A673 (cell line): ENCODE measurements at regions of chr22 and their contacts with region 1.

Region 1: GRCh38 chr22:18077639-18078328 is at the start of gene PEX26:
- DNase-seq: peak; percentile 97
- H3K4me3 ChIP-seq: peak within 1 kb of the TSS; percentile 91
- H3K27ac ChIP-seq: peak within 1 kb of the TSS; percentile 70
- H3K4me1 ChIP-seq: peaks cover 19% of the 10 kb centered on the region
- H3K27me3 ChIP-seq: no peaks in the 10 kb centered on the region
- CTCF ChIP-seq: no peak
- total RNA-seq, gene PEX26: 36.9 and 38.3 TPM in 2 replicates

Region 2: GRCh38 chr22:17552737-17553136 is 525.0 kb before region 1 on chr22:
- CTCF ChIA-PET with region 1: no interaction called
- POLR2A ChIA-PET with region 1: no interaction called
- intact Hi-C with region 1: loop called (anchors 10 kb)
- DNase-seq: no peak
- H3K4me3 ChIP-seq: no peak overlapping the region
- H3K27ac ChIP-seq: no peak overlapping the region
- H3K4me1 ChIP-seq: no peaks in the 10 kb centered on the region
- H3K27me3 ChIP-seq: no peaks in the 10 kb centered on the region
- CTCF ChIP-seq: no peak

Region 3: DNA sequence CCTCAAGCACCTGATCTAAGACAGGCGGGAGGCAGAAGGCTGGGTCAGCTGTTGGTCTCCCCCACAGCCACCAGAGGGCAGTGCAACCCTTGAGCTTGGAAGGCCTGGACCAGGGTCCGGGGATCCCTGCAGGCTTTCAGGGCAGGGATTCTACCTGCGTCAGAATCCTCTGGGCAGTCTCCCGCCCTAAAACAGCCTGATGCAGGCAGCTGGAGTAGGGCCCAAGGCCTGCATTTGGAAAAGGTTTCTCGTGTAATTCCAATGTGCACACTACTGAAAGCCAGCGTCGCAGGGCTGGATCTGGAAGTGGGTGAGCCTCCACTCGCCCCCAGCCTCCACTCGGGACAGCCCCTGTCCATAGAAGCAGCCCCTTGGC is 335.3 kb before region 1 on chr22:
- CTCF ChIA-PET with region 1: interaction called, 10 read pairs
- POLR2A ChIA-PET with region 1: no interaction called
- intact Hi-C with region 1: loop called (anchors 2 kb)
- DNase-seq: peak; percentile 75
- H3K4me3 ChIP-seq: no peak overlapping the region
- H3K27ac ChIP-seq: no peak overlapping the region
- H3K4me1 ChIP-seq: no peaks in the 10 kb centered on the region
- H3K27me3 ChIP-seq: no peaks in the 10 kb centered on the region
- CTCF ChIP-seq: peak; percentile 74

Region 4: DNA sequence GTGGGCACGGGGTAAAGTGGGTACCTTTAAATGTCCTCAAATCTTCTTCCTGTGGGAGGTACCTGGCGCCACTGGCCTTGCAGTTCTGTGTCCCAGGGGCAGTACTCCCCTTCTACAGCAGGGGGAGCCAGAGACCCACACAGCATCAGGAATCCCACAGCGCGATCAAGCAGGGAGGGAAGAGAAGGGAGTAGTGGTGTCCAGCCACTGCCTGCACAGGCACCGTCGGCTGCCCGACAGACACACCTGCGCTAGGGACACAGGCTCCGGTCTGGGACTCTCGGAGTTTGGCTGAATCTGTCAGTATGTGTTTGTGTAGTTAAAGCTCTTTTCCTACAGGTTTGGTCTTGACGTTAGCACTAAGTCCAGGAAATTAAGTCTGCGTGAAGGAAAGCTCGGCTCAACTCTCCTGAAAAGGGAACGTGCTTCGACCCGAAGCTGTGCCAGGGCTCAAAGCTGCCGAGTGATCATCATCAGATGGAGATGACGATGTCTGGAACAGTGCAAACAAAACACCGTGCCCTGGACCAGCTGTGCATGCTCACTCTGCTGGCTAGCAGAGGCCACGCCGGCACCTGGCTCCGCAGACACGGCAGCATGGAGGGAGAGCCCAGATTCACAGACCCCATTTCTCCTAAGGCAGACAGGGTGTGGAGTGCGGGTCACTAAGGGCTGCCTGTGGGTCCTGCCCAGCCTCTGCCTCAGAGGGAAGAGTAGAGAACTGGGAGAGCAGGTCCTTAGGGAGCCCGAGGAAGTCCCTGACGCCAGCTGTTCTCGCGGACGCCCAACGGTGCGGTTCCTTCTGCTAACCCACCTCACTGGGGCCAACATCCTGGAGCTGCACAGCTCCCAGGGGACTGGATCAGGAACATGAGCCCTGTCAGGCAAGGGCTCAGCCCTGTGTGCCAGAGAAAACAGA is 247.5 kb before region 1 on chr22:
- CTCF ChIA-PET with region 1: interaction called, 24 read pairs
- POLR2A ChIA-PET with region 1: interaction called, 3 read pairs
- intact Hi-C with region 1: loop called (anchors 1 kb)
- DNase-seq: peak; percentile 86
- H3K4me3 ChIP-seq: no peak overlapping the region
- H3K27ac ChIP-seq: no peak overlapping the region
- H3K4me1 ChIP-seq: no peaks in the 10 kb centered on the region
- H3K27me3 ChIP-seq: no peaks in the 10 kb centered on the region
- CTCF ChIP-seq: peak; percentile 97